A673 (cell line): ENCODE measurements at regions of chr2 and their contacts with region 1.

Region 1: GRCh38 chr2:17620280-17620679 is 79.8 kb downstream of the VSNL1 start:
- DNase-seq: peak; percentile 83
- H3K4me3 ChIP-seq: no peak overlapping the region
- H3K27ac ChIP-seq: no peak overlapping the region
- H3K4me1 ChIP-seq: peaks cover 47% of the 10 kb centered on the region
- H3K27me3 ChIP-seq: no peaks in the 10 kb centered on the region
- CTCF ChIP-seq: no peak

Region 2: GRCh38 chr2:16635791-16636699 is 984.2 kb before region 1 on chr2:
- CTCF ChIA-PET with region 1: no interaction called
- POLR2A ChIA-PET with region 1: no interaction called
- intact Hi-C with region 1: loop called (anchors 10 kb)
- DNase-seq: peak; percentile 94
- H3K4me3 ChIP-seq: peak overlapping the region; percentile 2
- H3K27ac ChIP-seq: peak overlapping the region; percentile 94
- H3K4me1 ChIP-seq: peaks cover 100% of the 10 kb centered on the region
- H3K27me3 ChIP-seq: no peaks in the 10 kb centered on the region
- CTCF ChIP-seq: 0 out of 2 replicates have a peak, but pooled peaks have one; percentile 31

Region 3: GRCh38 chr2:16933355-16933754 is 686.9 kb before region 1 on chr2:
- CTCF ChIA-PET with region 1: no interaction called
- POLR2A ChIA-PET with region 1: no interaction called
- intact Hi-C with region 1: no loop called
- DNase-seq: peak; percentile 28
- H3K4me3 ChIP-seq: no peak overlapping the region
- H3K27ac ChIP-seq: no peak overlapping the region
- H3K4me1 ChIP-seq: no peaks in the 10 kb centered on the region
- H3K27me3 ChIP-seq: no peaks in the 10 kb centered on the region
- CTCF ChIP-seq: no peak

Region 4: GRCh38 chr2:17538844-17539554 is 81.3 kb before region 1 on chr2:
- CTCF ChIA-PET with region 1: no interaction called
- POLR2A ChIA-PET with region 1: no interaction called
- intact Hi-C with region 1: loop called (anchors 5 kb)
- DNase-seq: peak; percentile 93
- H3K4me3 ChIP-seq: peak overlapping the region; percentile 64
- H3K27ac ChIP-seq: peak overlapping the region; percentile 29
- H3K4me1 ChIP-seq: peaks cover 3% of the 10 kb centered on the region
- H3K27me3 ChIP-seq: no peaks in the 10 kb centered on the region
- CTCF ChIP-seq: 0 out of 2 replicates have a peak, but pooled peaks have one; percentile 10